K562 (cell line): ENCODE measurements at regions of chr17 and their contacts with region 1.

Region 1: GRCh38 chr17:68777243-68777855 is 176.2 kb upstream of the FAM20A start:
- DNase-seq: peak; percentile 27 to 64 (median 32)
- ATAC-seq: peak; percentile 66
- H3K4me3 ChIP-seq: no peak overlapping the region
- H3K27ac ChIP-seq: no peak overlapping the region
- H3K4me1 ChIP-seq: no peaks in the 10 kb centered on the region
- H3K27me3 ChIP-seq: no peaks in the 10 kb centered on the region
- CTCF ChIP-seq: peak; percentile 64 to 81 (median 65)
- EP300 ChIP-seq: no peak
- POLR2A ChIP-seq: no peak
- RAD21 ChIP-seq: peak; percentile 90 to 92

Region 2: GRCh38 chr17:68909066-68909465 is 131.7 kb after region 1 on chr17:
- CTCF ChIA-PET with region 1: no interaction called
- POLR2A ChIA-PET with region 1: no interaction called
- in situ Hi-C with region 1: no loop called
- intact Hi-C with region 1: loop called (anchors 5 kb)
- DNase-seq: peak in 2 of 4 experiments; percentile 8 to 51
- ATAC-seq: peak; percentile 81
- H3K4me3 ChIP-seq: no peak overlapping the region
- H3K27ac ChIP-seq: peak overlapping the region; percentile 87; the same call in 2 of the 3 replicates
- H3K4me1 ChIP-seq: peaks cover 0 to 10% of the 10 kb centered on the region in 2 experiments; a peak in 3 of 5 replicates
- H3K27me3 ChIP-seq: no peaks in the 10 kb centered on the region
- CTCF ChIP-seq: no peak
- EP300 ChIP-seq: no peak
- POLR2A ChIP-seq: no peak
- RAD21 ChIP-seq: no peak

Region 3: GRCh38 chr17:69058165-69058564 is 280.8 kb after region 1 on chr17:
- CTCF ChIA-PET with region 1: no interaction called
- POLR2A ChIA-PET with region 1: no interaction called
- in situ Hi-C with region 1: loop called (anchors 5 kb)
- intact Hi-C with region 1: loop called (anchors 1 kb)
- DNase-seq: peak in 2 of 4 experiments; percentile 33 to 59
- ATAC-seq: peak; percentile 95
- H3K4me3 ChIP-seq: no peak overlapping the region
- H3K27ac ChIP-seq: no peak overlapping the region
- H3K4me1 ChIP-seq: 0 out of 5 replicates have a peak, but pooled peaks cover 0 to 1% of the 10 kb centered on the region in 2 experiments
- H3K27me3 ChIP-seq: no peaks in the 10 kb centered on the region
- CTCF ChIP-seq: peak; percentile 61 to 98 (median 97)
- EP300 ChIP-seq: no peak
- POLR2A ChIP-seq: no peak
- RAD21 ChIP-seq: peak; percentile 71 to 90

Region 4: DNA sequence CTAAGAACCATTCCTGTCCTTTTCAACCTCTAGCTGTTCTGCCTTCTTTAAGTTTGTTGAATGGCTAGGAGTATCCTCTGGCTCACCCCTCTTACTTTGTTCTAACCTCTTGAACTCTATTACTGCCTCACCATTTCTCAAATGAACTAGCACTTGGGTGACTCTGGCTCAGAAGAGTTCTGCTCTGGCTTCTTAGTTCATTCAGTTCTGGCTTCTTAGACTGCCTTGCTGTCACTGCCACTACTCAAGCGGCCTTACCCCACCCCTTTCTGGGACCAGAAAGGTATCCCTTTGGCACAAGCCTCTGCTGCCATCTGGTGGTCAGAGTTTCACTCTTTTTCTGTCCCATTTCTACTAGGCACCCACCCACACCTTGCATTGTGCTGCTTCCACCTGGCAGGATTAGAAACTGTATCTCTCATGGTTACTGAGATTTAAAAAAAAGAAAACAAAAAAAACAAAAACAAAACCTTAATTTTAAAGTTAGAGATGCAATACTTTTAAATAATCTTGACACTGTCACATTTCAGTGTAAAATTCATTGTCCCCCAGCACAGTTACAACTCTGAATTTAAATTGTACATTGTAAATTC is 458.1 kb after region 1 on chr17:
- CTCF ChIA-PET with region 1: interaction called, 44 read pairs
- POLR2A ChIA-PET with region 1: interaction called, 3 read pairs
- in situ Hi-C with region 1: loop called (anchors 5 kb)
- intact Hi-C with region 1: loop called (anchors 1 kb)
- DNase-seq: peak; percentile 77 to 94 (median 81)
- ATAC-seq: peak; percentile 99
- H3K4me3 ChIP-seq: no peak overlapping the region
- H3K27ac ChIP-seq: peak overlapping the region; percentile 34; the same call in 2 of the 3 replicates
- H3K4me1 ChIP-seq: peaks cover 0 to 15% of the 10 kb centered on the region in 2 experiments; a peak in 2 of 5 replicates
- H3K27me3 ChIP-seq: no peaks in the 10 kb centered on the region
- CTCF ChIP-seq: peak; percentile 87 to 97 (median 96)
- EP300 ChIP-seq: 0 out of 2 replicates have a peak, but pooled peaks have one; percentile 11
- POLR2A ChIP-seq: no peak
- RAD21 ChIP-seq: peak; percentile 98 to 99

Region 5: GRCh38 chr17:69246726-69247375 is 469.5 kb after region 1 on chr17:
- CTCF ChIA-PET with region 1: interaction called, 17 read pairs
- POLR2A ChIA-PET with region 1: no interaction called
- in situ Hi-C with region 1: loop called (anchors 5 kb)
- intact Hi-C with region 1: loop called (anchors 1 kb)
- DNase-seq: peak; percentile 33 to 62 (median 38)
- ATAC-seq: peak; percentile 78
- H3K4me3 ChIP-seq: no peak overlapping the region
- H3K27ac ChIP-seq: no peak overlapping the region
- H3K4me1 ChIP-seq: no peaks in the 10 kb centered on the region; a peak in 1 of 5 replicates
- H3K27me3 ChIP-seq: no peaks in the 10 kb centered on the region
- CTCF ChIP-seq: peak in 2 of 3 experiments; percentile 34 to 76; a peak in 4 of 6 replicates
- EP300 ChIP-seq: no peak
- POLR2A ChIP-seq: no peak
- RAD21 ChIP-seq: peak; percentile 87 to 88